Activated CD8-positive, alpha-beta T cell treated with anti-CD3 and anti-CD28 coated beads for 36 hours (primary cell): ENCODE measurements at regions of chr5 and their contacts with region 1.

Region 1: GRCh38 chr5:58860680-58861079 is 277.8 kb downstream of the RAB3C start:
- DNase-seq: no peak
- ATAC-seq: no peak
- H3K4me3 Mint-ChIP-seq: no peak overlapping the region
- H3K27ac Mint-ChIP-seq: no peak overlapping the region
- H3K4me1 Mint-ChIP-seq: no peaks in the 10 kb centered on the region
- H3K27me3 Mint-ChIP-seq: peaks cover 9% of the 10 kb centered on the region
- CTCF ChIP-seq: no peak

Region 2: DNA sequence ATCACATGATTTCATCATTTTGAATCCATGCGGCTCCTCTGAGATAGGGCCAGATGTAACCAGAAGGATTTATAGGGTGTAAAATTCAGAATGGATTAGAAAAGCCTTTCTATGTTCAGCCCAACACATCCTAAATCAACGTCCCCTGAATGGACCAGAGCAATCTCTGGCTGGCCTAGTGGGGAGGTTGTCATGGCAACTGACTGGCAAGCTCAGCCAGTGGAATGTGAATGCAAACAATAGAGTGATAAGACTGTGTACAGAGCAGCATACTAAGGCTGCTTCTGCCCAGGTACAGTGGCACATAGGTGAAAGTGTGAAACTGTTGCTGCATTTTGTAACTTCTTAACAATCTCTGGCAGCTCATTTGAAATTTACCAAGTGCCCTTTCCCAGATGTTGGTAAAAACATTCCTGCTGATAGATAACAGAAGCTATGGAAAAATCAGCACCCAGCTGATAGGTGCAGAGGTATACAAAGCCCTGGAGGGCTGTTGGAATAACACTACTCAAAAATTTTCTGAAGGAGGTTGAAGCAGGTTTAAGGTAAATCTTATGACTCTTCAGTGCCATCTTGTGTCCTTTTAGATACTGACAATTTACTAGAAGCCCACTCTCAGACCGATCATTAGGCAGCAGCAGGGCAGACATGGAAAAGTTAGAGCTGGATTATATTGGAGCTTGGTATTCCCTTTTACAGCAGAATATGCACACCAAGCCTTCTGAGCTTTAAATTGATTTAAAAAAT is 10.6 kb before region 1 on chr5:
- CTCF ChIA-PET with region 1: interaction called, 18 read pairs
- POLR2A ChIA-PET with region 1: no interaction called
- intact Hi-C with region 1: no loop called
- DNase-seq: no peak
- ATAC-seq: peak; percentile 55
- H3K4me3 Mint-ChIP-seq: no peak overlapping the region
- H3K27ac Mint-ChIP-seq: no peak overlapping the region
- H3K4me1 Mint-ChIP-seq: no peaks in the 10 kb centered on the region
- H3K27me3 Mint-ChIP-seq: peaks cover 3% of the 10 kb centered on the region
- CTCF ChIP-seq: peak; percentile 55

Region 3: GRCh38 chr5:58871648-58872242 is 11.1 kb after region 1 on chr5:
- CTCF ChIA-PET with region 1: interaction called, 10 read pairs
- POLR2A ChIA-PET with region 1: no interaction called
- intact Hi-C with region 1: no loop called
- DNase-seq: peak; percentile 45
- ATAC-seq: peak; percentile 53
- H3K4me3 Mint-ChIP-seq: no peak overlapping the region
- H3K27ac Mint-ChIP-seq: no peak overlapping the region
- H3K4me1 Mint-ChIP-seq: no peaks in the 10 kb centered on the region
- H3K27me3 Mint-ChIP-seq: peaks cover 11% of the 10 kb centered on the region
- CTCF ChIP-seq: peak; percentile 84